Esophagus squamous epithelium (tissue), 5 donors: ENCODE measurements at regions of chr10 and their contacts with region 1.

Region 1: GRCh38 chr10:17430647-17431355 is 23.6 kb downstream of the ST8SIA6 start:
- DNase-seq: no peak
- H3K4me3 ChIP-seq: no peak overlapping the region
- H3K27ac ChIP-seq: no peak overlapping the region
- H3K4me1 ChIP-seq: peaks cover 0 to 7% (median 0%) of the 10 kb centered on the region in 3 donors
- H3K27me3 ChIP-seq: peaks cover 0 to 40% (median 0%) of the 10 kb centered on the region in 4 donors
- CTCF ChIP-seq: peak; percentile 49 to 89 (median 84)
- POLR2A ChIP-seq: no peak

Region 2: GRCh38 chr10:17290226-17290625 is 140.6 kb before region 1 on chr10:
- intact Hi-C with region 1: loop called (anchors 5 kb)
- DNase-seq: no peak
- H3K4me3 ChIP-seq: no peak overlapping the region
- H3K27ac ChIP-seq: no peak overlapping the region
- H3K4me1 ChIP-seq: no peaks in the 10 kb centered on the region
- H3K27me3 ChIP-seq: peaks cover 0 to 22% (median 0%) of the 10 kb centered on the region in 4 donors
- CTCF ChIP-seq: peak in 4 of 6 experiments; percentile 14 to 52 (median 32)
- POLR2A ChIP-seq: no peak

Region 3: DNA sequence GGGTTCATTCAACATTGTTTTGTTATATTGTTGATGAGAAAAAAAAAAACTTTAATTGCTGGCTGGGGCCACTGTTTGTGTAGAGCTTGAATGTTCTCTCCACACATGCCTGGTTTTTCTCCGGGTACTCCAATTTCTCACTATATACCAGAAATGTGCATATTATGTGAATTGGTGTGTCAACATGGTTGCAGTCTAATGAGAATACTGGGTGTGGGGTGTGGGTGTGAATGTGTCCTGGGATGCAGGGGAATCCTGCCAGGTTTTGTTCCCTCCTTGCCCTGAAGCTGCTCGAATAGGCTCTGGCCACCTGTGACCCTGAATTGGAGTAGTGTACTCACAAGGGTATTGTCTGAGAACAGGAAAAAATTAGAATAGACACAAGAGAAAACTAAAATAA is 121.4 kb before region 1 on chr10:
- intact Hi-C with region 1: no loop called
- DNase-seq: no peak
- H3K4me3 ChIP-seq: no peak overlapping the region
- H3K27ac ChIP-seq: no peak overlapping the region
- H3K4me1 ChIP-seq: no peaks in the 10 kb centered on the region
- H3K27me3 ChIP-seq: peaks cover 0 to 3% (median 0%) of the 10 kb centered on the region in 4 donors
- CTCF ChIP-seq: no peak
- POLR2A ChIP-seq: no peak

Region 4: DNA sequence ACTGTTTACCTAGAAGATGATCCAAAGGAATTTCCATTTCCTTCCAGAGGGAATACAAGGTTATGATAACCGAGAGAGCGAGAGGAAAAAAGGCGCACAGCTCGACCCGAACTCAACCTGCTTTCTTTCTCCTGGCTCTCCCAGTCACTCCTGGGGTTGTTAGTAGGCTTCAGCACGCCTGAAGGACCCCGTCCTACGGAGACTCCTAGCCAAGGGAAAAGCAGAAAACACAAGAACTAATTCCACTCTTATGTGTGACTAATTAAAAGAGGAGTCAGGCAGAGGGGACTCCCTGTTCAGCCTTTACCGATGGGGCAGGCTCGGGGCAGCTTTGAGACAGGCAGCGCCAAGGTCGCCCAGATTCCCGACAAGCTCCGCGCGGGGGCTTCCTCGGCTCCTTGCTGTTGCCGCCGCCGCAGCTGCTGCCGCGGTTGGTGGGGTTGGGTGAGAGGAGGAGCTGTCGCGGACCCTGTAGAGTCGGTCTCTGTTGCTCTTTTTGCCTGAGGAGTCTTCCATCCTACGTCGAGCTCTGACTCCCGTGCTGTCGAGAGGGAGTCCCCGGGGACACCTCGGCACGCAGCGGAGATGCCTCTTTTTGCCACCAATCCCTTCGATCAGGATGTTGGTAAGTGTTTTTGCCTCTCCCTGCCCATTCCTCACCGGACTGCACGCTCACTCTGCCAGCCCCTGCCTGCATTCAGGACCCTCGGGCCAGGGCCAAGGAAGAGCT is 213.1 kb after region 1 on chr10 and contains the start of gene STAM:
- intact Hi-C with region 1: no loop called
- DNase-seq: peak; percentile 37
- H3K4me3 ChIP-seq: peak within 1 kb of the TSS; percentile 72 to 95 (median 82)
- H3K27ac ChIP-seq: peak within 1 kb of the TSS; percentile 96 to 98 (median 98)
- H3K4me1 ChIP-seq: peaks cover 7 to 56% (median 28%) of the 10 kb centered on the region in 3 donors
- H3K27me3 ChIP-seq: no peaks in the 10 kb centered on the region
- CTCF ChIP-seq: peak in 1 of 6 experiments; percentile 34
- POLR2A ChIP-seq: peak in 3 of 4 donors; percentile 20 to 81 (median 62)
- total RNA-seq, gene STAM: 19.9 to 28.6 (median 22.7) TPM